Endothelial cell of umbilical vein (primary cell): ENCODE measurements at regions of chr6 and their contacts with region 1.

Region 1: GRCh38 chr6:105077596-105078385 is 102.0 kb downstream of the POPDC3 start:
- DNase-seq: peak; percentile 72
- H3K4me3 ChIP-seq: no peak overlapping the region
- H3K27ac ChIP-seq: no peak overlapping the region
- H3K4me1 ChIP-seq: no peaks in the 10 kb centered on the region
- H3K27me3 ChIP-seq: peaks cover 0 to 2% of the 10 kb centered on the region in 2 experiments
- CTCF ChIP-seq: peak in 1 of 2 donors; percentile 31
- POLR2A ChIP-seq: no peak

Region 2: GRCh38 chr6:104682722-104683643 is 394.8 kb before region 1 on chr6:
- CTCF ChIA-PET with region 1: interaction called, 5 read pairs
- POLR2A ChIA-PET with region 1: no interaction called
- dilution Hi-C with region 1: no loop called
- intact Hi-C with region 1: loop called (anchors 1 kb)
- DNase-seq: peak; percentile 56
- H3K4me3 ChIP-seq: no peak overlapping the region
- H3K27ac ChIP-seq: peak overlapping the region; percentile 17
- H3K4me1 ChIP-seq: no peaks in the 10 kb centered on the region
- H3K27me3 ChIP-seq: no peaks in the 10 kb centered on the region
- CTCF ChIP-seq: peak; percentile 78 to 86
- POLR2A ChIP-seq: no peak

Region 3: DNA sequence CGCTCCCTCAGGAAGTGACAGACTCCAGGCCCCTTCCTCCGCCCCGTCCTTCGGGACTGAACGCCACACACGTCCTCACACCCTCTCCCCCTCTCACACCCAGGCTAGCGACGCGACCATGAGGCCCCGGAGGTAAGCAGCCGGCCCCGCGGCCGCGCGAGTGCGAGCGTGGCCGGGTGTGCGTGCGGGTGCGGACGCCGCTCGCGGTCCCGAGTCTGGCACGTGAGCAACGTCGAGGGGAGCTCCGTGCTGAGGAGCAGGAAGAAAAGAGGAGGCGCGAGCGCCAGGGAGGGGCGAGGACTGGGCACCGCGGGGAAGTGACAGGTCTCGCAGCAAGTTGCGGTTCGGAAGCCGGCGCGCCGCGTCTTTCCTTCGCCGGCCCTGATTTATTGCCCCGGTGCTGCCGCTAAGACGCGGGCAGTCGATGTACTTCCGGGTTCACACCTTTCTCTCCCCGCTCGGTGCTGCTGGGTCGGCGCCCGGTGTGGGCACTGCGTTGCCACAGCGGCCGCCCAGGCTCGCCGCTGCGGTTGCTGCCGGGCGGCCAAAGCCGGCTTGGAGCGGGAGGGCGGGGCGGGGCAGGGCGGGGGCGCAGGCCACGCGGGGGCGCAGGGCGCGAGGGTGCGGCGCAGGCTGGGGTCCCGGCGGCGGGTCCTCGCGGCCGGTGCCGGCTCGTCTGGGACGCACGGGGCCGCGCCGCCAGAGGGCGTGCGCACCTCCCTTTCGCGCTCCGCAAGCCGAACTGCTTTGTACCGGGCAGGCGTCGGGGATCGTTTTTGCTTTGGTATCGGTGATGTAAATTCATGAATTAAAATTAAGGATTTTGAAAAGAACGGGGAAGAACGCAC is 136.7 kb before region 1 on chr6:
- CTCF ChIA-PET with region 1: interaction called, 34 read pairs
- POLR2A ChIA-PET with region 1: no interaction called
- dilution Hi-C with region 1: no loop called
- intact Hi-C with region 1: loop called (anchors 1 kb)
- DNase-seq: peak; percentile 33
- H3K4me3 ChIP-seq: peak overlapping the region; percentile 25 to 42 (median 38)
- H3K27ac ChIP-seq: no peak overlapping the region
- H3K4me1 ChIP-seq: peaks cover 4% of the 10 kb centered on the region
- H3K27me3 ChIP-seq: peaks cover 12 to 54% of the 10 kb centered on the region in 2 experiments
- CTCF ChIP-seq: peak; percentile 66 to 74
- POLR2A ChIP-seq: no peak

Region 4: DNA sequence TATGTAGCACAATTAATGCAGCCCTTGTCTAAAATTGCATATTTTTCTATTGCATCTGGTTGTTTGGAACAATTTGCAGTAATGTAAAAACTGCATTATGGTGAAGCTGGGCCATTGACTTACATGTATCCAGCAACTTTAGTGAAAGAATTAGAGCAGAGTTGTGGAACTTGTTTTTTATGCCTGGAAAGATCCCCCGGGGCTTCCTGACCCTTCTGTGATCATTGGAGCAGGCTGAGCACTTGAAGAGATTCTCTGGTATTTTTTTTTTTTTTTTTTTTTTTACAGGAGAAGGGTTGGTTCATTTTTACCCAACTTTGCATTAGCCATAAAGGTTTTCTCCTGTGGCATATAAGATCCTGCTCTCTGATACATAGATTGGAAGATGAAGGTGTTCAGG is 75.9 kb before region 1 on chr6:
- CTCF ChIA-PET with region 1: interaction called, 207 read pairs
- POLR2A ChIA-PET with region 1: no interaction called
- dilution Hi-C with region 1: no loop called
- intact Hi-C with region 1: no loop called
- DNase-seq: no peak
- H3K4me3 ChIP-seq: no peak overlapping the region
- H3K27ac ChIP-seq: no peak overlapping the region
- H3K4me1 ChIP-seq: no peaks in the 10 kb centered on the region
- H3K27me3 ChIP-seq: no peaks in the 10 kb centered on the region
- CTCF ChIP-seq: no peak
- POLR2A ChIP-seq: no peak

Region 5: DNA sequence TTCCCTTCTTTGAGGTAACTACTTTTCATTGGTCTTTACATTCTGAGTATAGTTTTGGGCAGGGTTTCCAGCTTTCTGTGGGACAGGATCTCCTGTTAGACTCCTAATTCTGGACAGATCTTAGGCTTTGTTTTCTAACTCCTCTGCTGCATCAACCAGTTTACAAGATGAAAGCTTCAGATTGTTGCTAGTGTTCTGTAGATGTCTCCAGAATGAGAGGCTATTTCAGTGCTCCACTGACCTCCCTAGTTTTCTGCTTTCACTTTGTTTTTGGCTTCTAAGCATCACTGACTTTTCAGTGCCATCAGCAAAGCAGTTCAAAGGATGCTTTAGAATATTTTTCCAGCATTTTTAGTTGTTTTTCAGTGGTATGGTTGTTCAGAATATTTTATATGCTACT is 19.5 kb before region 1 on chr6:
- CTCF ChIA-PET with region 1: interaction called, 14 read pairs
- POLR2A ChIA-PET with region 1: no interaction called
- dilution Hi-C with region 1: no loop called
- intact Hi-C with region 1: no loop called
- DNase-seq: no peak
- H3K4me3 ChIP-seq: no peak overlapping the region
- H3K27ac ChIP-seq: no peak overlapping the region
- H3K4me1 ChIP-seq: no peaks in the 10 kb centered on the region
- H3K27me3 ChIP-seq: no peaks in the 10 kb centered on the region
- CTCF ChIP-seq: no peak
- POLR2A ChIP-seq: no peak

Region 6: DNA sequence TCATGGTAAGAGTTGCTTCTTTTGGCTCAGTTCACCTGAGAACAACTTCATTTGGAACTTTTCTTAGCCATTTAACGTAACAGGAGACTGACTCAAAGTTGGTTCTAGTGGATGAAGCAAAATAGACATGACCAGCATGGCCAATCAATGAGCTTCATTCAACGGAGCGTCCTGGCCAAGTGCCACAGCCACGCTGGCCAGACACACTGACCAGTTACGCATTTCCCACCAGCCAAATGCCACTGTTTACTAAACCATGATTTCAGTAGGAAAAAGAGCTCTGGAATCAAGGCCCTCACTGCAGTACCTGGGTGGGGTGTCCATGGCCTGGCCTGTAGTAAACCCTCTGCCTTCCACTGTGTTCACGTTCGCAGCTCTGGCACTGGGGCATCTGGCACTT is 21.6 kb after region 1 on chr6:
- CTCF ChIA-PET with region 1: no interaction called
- POLR2A ChIA-PET with region 1: no interaction called
- dilution Hi-C with region 1: no loop called
- intact Hi-C with region 1: no loop called
- DNase-seq: no peak
- H3K4me3 ChIP-seq: no peak overlapping the region
- H3K27ac ChIP-seq: no peak overlapping the region
- H3K4me1 ChIP-seq: no peaks in the 10 kb centered on the region
- H3K27me3 ChIP-seq: no peaks in the 10 kb centered on the region
- CTCF ChIP-seq: no peak
- POLR2A ChIP-seq: no peak

Region 7: GRCh38 chr6:105402939-105403935 is 325.4 kb after region 1 on chr6 and contains the start of gene PREP:
- CTCF ChIA-PET with region 1: interaction called, 12 read pairs
- POLR2A ChIA-PET with region 1: no interaction called
- dilution Hi-C with region 1: loop called (anchors 25 kb)
- intact Hi-C with region 1: no loop called
- DNase-seq: peak; percentile 85
- H3K4me3 ChIP-seq: peak within 1 kb of the TSS; percentile 81 to 97 (median 84)
- H3K27ac ChIP-seq: peak within 1 kb of the TSS; percentile 62
- H3K4me1 ChIP-seq: peaks cover 6% of the 10 kb centered on the region
- H3K27me3 ChIP-seq: no peaks in the 10 kb centered on the region
- CTCF ChIP-seq: peak; percentile 68 to 74
- POLR2A ChIP-seq: peak; percentile 64
- total RNA-seq, gene PREP: 37.7 and 40.7 TPM in 2 replicates